Common myeloid progenitor, CD34-positive (primary cell): ENCODE measurements at regions of chr6 and their contacts with region 1.

Region 1: GRCh38 chr6:28335564-28336283 is at the start of gene ZSCAN31:
- DNase-seq: peak; percentile 99
- H3K4me3 ChIP-seq: peak within 1 kb of the TSS; percentile 60 to 96 (median 90)
- H3K27ac ChIP-seq: peak within 1 kb of the TSS; percentile 95 to 99
- H3K4me1 ChIP-seq: peaks cover 9 to 46% (median 28%) of the 10 kb centered on the region in 4 experiments
- H3K27me3 ChIP-seq: no peaks in the 10 kb centered on the region

Region 2: DNA sequence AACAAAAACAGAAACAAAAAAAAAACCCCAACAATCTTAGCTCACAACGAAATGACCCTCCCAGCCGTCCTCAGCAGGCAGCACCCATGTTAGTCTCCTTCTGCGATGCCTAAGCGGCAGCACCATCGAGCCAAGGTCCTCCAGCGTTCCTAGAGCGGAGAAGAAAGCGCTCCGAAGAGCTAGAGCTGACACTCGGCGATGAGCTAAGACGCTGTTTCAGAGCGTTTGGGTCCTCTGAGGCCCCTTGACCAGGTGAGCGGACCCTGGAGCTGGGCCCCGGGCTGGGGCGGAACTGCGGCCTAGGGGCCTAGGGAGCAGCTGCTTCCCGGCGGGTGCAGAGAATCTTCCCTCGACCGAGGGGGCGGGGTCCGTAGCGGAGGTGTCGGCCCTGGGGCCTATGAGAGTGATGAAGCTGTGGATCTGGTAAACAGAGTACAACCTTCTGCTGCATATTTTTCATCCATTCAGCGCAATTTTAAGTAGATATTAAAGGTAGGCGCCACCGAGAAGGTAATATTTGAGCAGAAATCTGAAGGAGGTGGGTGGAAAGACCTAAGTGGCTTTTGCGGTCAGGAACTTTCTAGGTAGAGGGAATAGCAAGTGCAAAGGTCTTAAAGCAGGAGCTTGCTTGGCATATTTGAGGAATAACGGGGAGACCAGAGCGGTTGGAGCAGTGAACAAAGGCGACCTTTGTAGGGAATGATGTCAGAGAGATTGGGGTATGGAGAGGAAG is 68.6 kb before region 1 on chr6 and contains the start of gene ZSCAN26:
- CTCF ChIA-PET with region 1: no interaction called
- POLR2A ChIA-PET with region 1: interaction called, 11 read pairs
- DNase-seq: peak; percentile 93 to 97 (median 96)
- H3K4me3 ChIP-seq: peak within 1 kb of the TSS; percentile 52 to 95 (median 90)
- H3K27ac ChIP-seq: peak within 1 kb of the TSS; percentile 74 to 90
- H3K4me1 ChIP-seq: peaks cover 11 to 40% (median 19%) of the 10 kb centered on the region in 4 experiments
- H3K27me3 ChIP-seq: no peaks in the 10 kb centered on the region

Region 3: DNA sequence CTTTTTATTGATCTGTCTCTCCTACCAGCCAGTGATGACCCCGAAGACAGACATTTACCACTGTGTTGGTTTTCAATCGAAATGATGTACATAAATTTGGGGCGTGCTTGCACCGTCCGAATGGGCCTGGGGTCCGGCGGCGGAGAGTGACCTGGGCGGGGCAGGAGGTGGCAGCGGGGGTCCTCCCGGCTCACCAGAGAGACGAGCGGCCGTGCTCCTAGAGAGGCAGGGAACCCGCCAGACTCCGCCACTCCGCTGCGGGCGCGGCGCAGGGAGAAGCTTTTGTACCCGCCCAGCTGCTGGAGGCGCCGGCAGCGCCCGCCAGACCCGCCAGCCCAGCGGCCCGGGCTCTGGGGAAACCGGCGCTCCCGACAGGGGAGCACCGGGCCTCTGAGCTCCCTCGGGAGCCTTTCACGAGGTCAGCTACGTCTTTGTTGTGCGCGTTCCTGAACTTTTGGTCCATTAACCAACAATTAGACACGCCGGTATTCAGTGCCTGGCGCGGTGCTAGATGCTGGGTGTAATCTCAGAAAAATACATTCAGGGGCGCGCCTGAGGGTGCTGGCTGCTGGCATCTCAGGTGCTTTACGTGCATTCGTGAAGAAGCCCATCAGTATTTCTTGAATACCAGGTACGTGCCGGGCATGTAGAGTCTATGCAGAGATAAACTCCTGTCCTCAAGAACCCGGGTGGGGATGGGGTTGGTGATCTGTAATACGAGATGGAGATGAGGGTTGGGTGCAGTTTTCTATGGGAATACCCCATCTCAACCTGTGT is 54.2 kb before region 1 on chr6 and contains the start of gene PGBD1:
- CTCF ChIA-PET with region 1: interaction called, 3 read pairs
- POLR2A ChIA-PET with region 1: interaction called, 10 read pairs
- DNase-seq: peak; percentile 70 to 77 (median 74)
- H3K4me3 ChIP-seq: peak within 1 kb of the TSS; percentile 58 to 88 (median 81)
- H3K27ac ChIP-seq: peak within 1 kb of the TSS; percentile 42 to 72
- H3K4me1 ChIP-seq: peaks cover 0 to 15% (median 8%) of the 10 kb centered on the region in 4 experiments
- H3K27me3 ChIP-seq: no peaks in the 10 kb centered on the region

Region 4: DNA sequence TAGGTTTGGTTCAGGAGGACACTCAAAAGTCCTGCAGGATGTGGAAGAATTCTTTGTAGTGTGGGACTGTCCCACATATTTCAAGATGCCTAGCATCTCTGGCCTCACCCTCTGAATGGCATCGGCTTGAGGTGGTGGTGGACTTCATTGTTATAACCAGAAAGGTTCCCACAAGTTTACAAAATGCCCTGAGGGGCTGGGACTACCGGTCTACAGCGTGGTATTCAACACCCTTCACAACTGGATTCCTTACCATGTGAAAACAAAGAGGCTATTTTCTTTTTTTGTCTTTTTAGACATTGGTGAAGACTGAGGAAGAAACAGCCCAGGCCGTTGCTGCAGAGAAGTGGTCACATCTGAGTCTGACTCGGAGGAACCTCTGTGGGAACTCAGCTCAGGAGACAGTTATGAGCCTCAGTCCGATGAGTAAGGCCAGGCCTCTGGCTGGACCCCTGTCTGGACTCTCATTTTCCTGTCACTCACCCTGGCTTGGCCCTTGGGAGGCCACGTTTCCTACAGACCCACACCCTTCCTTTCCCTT is 39.1 kb before region 1 on chr6:
- CTCF ChIA-PET with region 1: no interaction called
- POLR2A ChIA-PET with region 1: no interaction called
- DNase-seq: no peak
- H3K4me3 ChIP-seq: no peak overlapping the region
- H3K27ac ChIP-seq: no peak overlapping the region
- H3K4me1 ChIP-seq: no peaks in the 10 kb centered on the region
- H3K27me3 ChIP-seq: no peaks in the 10 kb centered on the region

Region 5: GRCh38 chr6:28347119-28347518 is 11.4 kb after region 1 on chr6:
- CTCF ChIA-PET with region 1: interaction called, 42 read pairs
- POLR2A ChIA-PET with region 1: interaction called, 20 read pairs
- DNase-seq: no peak
- H3K4me3 ChIP-seq: no peak overlapping the region
- H3K27ac ChIP-seq: no peak overlapping the region
- H3K4me1 ChIP-seq: peaks cover 10 to 25% (median 17%) of the 10 kb centered on the region in 4 experiments
- H3K27me3 ChIP-seq: no peaks in the 10 kb centered on the region

Region 6: DNA sequence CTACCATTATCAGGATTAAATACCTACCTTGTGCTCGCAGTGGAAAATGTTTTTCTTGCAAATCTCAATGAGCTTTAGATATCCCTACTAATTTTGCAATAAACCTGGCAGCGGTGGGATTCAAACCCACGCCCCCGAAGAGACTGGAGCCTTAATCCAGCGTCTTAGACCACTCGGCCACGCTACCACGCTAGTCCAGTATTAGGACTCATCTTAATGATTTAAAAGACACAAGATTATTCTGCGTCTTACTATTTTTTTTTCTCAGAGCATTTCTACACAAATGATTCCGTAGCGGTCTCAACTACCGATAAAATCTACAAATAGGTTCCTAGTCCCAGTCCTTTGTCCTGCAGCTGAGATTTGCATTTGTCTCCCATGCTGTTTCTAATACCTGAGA is 142.8 kb after region 1 on chr6:
- CTCF ChIA-PET with region 1: no interaction called
- POLR2A ChIA-PET with region 1: no interaction called
- DNase-seq: no peak
- H3K4me3 ChIP-seq: no peak overlapping the region
- H3K27ac ChIP-seq: no peak overlapping the region
- H3K4me1 ChIP-seq: peaks cover 0 to 6% (median 1%) of the 10 kb centered on the region in 4 experiments
- H3K27me3 ChIP-seq: peaks cover 13 to 91% (median 33%) of the 10 kb centered on the region in 5 experiments